ENCODE measurements at regions of chr3 and their contacts with region 1.

Region 1: GRCh38 chr3:172595641-172596393 is 72.6 kb upstream of the TNFSF10 start:
- DNase-seq: peak; percentile 51
- H3K4me3 Mint-ChIP-seq: peak overlapping the region; percentile 72
- H3K27ac Mint-ChIP-seq: peak overlapping the region; percentile 76
- H3K4me1 Mint-ChIP-seq: peaks cover 60% of the 10 kb centered on the region
- H3K27me3 Mint-ChIP-seq: no peaks in the 10 kb centered on the region

Region 2: GRCh38 chr3:172332256-172333041 is 263.4 kb before region 1 on chr3:
- CTCF ChIA-PET with region 1: interaction called, 11 read pairs
- POLR2A ChIA-PET with region 1: no interaction called
- DNase-seq: peak; percentile 55
- H3K4me3 Mint-ChIP-seq: no peak overlapping the region
- H3K27ac Mint-ChIP-seq: no peak overlapping the region
- H3K4me1 Mint-ChIP-seq: peaks cover 10% of the 10 kb centered on the region
- H3K27me3 Mint-ChIP-seq: no peaks in the 10 kb centered on the region

Region 3: GRCh38 chr3:172501560-172501959 is 94.3 kb before region 1 on chr3:
- CTCF ChIA-PET with region 1: interaction called, 22 read pairs
- POLR2A ChIA-PET with region 1: interaction called, 3 read pairs
- DNase-seq: no peak
- H3K4me3 Mint-ChIP-seq: no peak overlapping the region
- H3K27ac Mint-ChIP-seq: no peak overlapping the region
- H3K4me1 Mint-ChIP-seq: peaks cover 12% of the 10 kb centered on the region
- H3K27me3 Mint-ChIP-seq: no peaks in the 10 kb centered on the region

Region 4: DNA sequence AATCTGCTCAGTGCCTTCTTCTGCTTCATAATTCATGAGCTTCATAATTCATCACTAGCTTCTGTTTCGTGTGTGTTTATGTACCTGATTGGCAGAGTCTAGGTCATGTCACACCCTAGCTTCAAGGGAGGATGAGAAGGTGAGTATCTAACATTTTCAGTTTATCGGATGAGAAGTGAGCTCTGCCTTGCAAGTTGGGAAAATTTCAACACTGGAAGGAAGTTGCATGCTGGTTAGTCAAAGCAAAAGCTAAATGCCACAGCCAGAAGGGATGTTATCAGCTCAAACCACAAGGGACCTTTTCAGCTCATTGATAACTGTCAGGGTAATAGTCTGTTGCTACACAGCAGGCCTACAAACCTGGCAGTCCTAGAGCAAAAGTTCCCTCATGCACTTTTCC is 65.3 kb before region 1 on chr3:
- CTCF ChIA-PET with region 1: interaction called, 31 read pairs
- POLR2A ChIA-PET with region 1: interaction called, 36 read pairs
- DNase-seq: peak; percentile 49
- H3K4me3 Mint-ChIP-seq: peak overlapping the region; percentile 31
- H3K27ac Mint-ChIP-seq: peak overlapping the region; percentile 88
- H3K4me1 Mint-ChIP-seq: peaks cover 40% of the 10 kb centered on the region
- H3K27me3 Mint-ChIP-seq: no peaks in the 10 kb centered on the region

Region 5: DNA sequence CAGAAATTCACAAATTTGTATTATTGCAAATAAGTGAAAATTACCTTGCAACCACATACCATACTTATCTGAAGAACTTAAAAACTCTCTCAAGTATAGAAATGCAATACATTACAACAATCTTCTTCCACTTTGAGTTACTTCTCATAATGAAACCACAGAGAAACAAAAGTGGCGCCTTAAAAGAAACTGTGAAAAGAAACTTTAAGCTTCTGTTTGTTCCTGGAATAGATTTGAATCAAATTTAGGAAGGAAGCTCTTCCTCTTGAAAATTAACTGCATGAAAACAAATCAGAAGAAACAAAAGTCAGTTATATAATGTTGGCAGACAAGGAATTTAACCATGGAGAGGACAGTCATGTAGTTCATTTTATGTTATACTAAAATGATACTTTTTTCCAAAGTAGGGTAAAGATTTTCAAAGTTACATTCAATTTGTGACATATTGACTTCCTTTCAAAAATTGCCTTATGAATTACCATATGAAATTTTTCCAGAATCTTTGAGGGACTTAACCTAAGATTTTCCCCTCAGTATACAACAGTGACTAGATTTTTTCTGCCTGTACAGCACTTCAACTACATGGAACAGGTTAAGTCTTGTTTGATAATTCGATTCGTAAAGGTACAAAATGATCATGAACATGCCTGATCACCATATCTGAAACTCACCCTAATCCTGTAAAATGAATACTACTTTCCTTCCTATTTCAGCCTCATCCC is 15.0 kb before region 1 on chr3:
- CTCF ChIA-PET with region 1: interaction called, 33 read pairs
- POLR2A ChIA-PET with region 1: interaction called, 9 read pairs
- DNase-seq: no peak
- H3K4me3 Mint-ChIP-seq: peak overlapping the region; percentile 49
- H3K27ac Mint-ChIP-seq: peak overlapping the region; percentile 91
- H3K4me1 Mint-ChIP-seq: peaks cover 92% of the 10 kb centered on the region
- H3K27me3 Mint-ChIP-seq: no peaks in the 10 kb centered on the region

Region 6: DNA sequence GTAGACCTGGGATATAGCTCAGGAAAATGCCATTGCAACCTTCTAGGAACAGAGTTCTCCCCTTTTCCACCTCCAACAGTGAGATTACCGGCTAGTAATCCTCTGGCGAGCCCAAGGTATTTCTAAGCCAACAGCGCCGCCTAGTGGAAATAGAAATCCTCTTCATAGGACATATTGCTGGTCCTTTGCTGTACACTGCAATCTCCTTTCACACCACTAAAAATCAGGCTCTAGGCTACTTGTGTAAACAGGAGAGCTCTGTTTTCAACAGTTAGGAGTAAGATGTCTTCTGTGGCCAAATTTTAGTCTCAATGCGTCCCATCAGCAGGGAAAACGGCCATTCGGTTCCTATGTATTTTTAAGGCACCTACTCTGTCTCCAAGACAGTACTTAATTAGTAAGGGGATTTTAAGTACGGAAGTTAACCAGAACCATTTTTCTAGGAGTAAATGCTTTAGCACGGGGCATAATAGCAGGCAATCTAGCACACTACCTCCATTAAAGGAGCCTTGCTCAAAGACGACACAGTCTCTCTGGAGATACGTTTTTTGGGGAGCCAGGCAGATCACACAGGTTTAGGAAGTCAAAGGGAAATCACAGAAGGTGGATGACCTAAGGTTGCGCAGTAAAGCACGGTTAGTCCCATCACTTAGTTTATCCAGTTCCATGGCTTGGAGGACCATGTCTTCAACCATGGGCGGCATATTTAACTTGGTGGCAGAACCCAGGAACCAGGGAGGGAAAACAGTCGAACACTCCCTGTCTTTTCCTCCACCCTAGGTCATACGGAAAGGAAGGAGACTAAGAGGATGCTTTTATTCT is 71.3 kb after region 1 on chr3:
- CTCF ChIA-PET with region 1: interaction called, 36 read pairs
- POLR2A ChIA-PET with region 1: no interaction called
- DNase-seq: peak; percentile 84
- H3K4me3 Mint-ChIP-seq: no peak overlapping the region
- H3K27ac Mint-ChIP-seq: no peak overlapping the region
- H3K4me1 Mint-ChIP-seq: peaks cover 22% of the 10 kb centered on the region
- H3K27me3 Mint-ChIP-seq: no peaks in the 10 kb centered on the region

Region 7: GRCh38 chr3:172685346-172686214 is 89.8 kb after region 1 on chr3:
- CTCF ChIA-PET with region 1: no interaction called
- POLR2A ChIA-PET with region 1: no interaction called
- DNase-seq: no peak
- H3K4me3 Mint-ChIP-seq: peak overlapping the region; percentile 1
- H3K27ac Mint-ChIP-seq: peak overlapping the region; percentile 63
- H3K4me1 Mint-ChIP-seq: peaks cover 32% of the 10 kb centered on the region
- H3K27me3 Mint-ChIP-seq: no peaks in the 10 kb centered on the region

Region 8: DNA sequence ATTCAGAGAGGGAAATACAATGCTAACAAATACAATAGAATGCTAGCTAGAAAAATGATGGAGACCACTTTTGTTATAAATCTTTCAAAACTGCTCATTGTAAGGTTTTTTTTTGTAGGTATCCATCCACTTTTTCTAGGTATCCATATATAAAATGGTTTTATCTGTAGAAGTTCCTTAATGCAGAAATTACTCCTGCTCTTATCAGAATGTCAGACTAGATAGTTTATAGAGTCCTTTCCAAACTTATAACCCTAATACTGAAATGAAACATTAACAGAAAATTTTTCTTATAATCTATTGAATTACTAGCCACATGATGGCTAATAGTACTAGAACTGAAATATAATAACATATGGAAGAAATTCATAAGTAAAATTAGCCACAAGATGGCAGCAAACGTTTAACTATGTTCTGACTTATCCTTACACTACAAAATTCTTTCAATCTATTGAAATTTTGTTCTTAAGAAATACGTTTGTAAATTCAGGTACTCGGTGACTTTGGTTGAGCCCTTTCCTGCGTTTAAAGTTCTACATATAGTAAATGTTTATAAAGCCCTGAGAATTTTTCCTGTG is 213.2 kb after region 1 on chr3:
- CTCF ChIA-PET with region 1: no interaction called
- POLR2A ChIA-PET with region 1: no interaction called
- DNase-seq: no peak
- H3K4me3 Mint-ChIP-seq: no peak overlapping the region
- H3K27ac Mint-ChIP-seq: no peak overlapping the region
- H3K4me1 Mint-ChIP-seq: no peaks in the 10 kb centered on the region
- H3K27me3 Mint-ChIP-seq: no peaks in the 10 kb centered on the region

Region 9: GRCh38 chr3:173013187-173013832 is 417.5 kb after region 1 on chr3:
- CTCF ChIA-PET with region 1: no interaction called
- POLR2A ChIA-PET with region 1: no interaction called
- DNase-seq: no peak
- H3K4me3 Mint-ChIP-seq: no peak overlapping the region
- H3K27ac Mint-ChIP-seq: no peak overlapping the region
- H3K4me1 Mint-ChIP-seq: no peaks in the 10 kb centered on the region
- H3K27me3 Mint-ChIP-seq: no peaks in the 10 kb centered on the region